Activated CD8-positive, alpha-beta T cell treated with anti-CD3 and anti-CD28 coated beads for 36 hours (primary cell): ENCODE measurements at regions of chr14 and their contacts with region 1.

Region 1: GRCh38 chr14:67571272-67571850 is 28.7 kb downstream of the PIGH start:
- DNase-seq: peak; percentile 84
- ATAC-seq: peak; percentile 96
- H3K4me3 Mint-ChIP-seq: no peak overlapping the region
- H3K27ac Mint-ChIP-seq: no peak overlapping the region
- H3K4me1 Mint-ChIP-seq: peaks cover 3% of the 10 kb centered on the region
- H3K27me3 Mint-ChIP-seq: no peaks in the 10 kb centered on the region
- CTCF ChIP-seq: peak; percentile 83

Region 2: DNA sequence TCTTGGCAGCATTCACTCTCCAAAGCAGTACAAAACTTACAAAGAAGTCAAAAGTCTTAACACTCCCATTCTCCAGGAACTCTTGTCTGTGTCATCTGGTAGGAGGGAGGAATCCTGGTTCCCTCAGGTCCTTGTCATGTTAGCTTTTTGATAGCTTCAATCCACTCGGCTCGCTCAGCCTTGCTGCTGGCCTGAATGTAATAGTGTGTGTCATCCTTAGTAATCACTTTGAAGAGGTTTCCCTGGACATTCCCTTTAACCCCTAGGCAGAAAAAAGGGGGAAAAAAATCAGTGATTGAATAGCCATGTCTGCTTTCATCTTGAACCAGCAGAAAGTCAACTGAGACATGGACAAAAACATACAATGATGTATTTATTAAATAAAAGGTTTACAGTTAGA is 184.2 kb before region 1 on chr14:
- CTCF ChIA-PET with region 1: interaction called, 10 read pairs
- POLR2A ChIA-PET with region 1: no interaction called
- intact Hi-C with region 1: no loop called
- DNase-seq: no peak
- ATAC-seq: no peak
- H3K4me3 Mint-ChIP-seq: no peak overlapping the region
- H3K27ac Mint-ChIP-seq: no peak overlapping the region
- H3K4me1 Mint-ChIP-seq: no peaks in the 10 kb centered on the region
- H3K27me3 Mint-ChIP-seq: no peaks in the 10 kb centered on the region
- CTCF ChIP-seq: no peak

Region 3: GRCh38 chr14:67420102-67420830 is 151.1 kb before region 1 on chr14:
- CTCF ChIA-PET with region 1: interaction called, 199 read pairs
- POLR2A ChIA-PET with region 1: interaction called, 3 read pairs
- intact Hi-C with region 1: no loop called
- DNase-seq: peak; percentile 53
- ATAC-seq: peak; percentile 67
- H3K4me3 Mint-ChIP-seq: no peak overlapping the region
- H3K27ac Mint-ChIP-seq: no peak overlapping the region
- H3K4me1 Mint-ChIP-seq: no peaks in the 10 kb centered on the region
- H3K27me3 Mint-ChIP-seq: peaks cover 13% of the 10 kb centered on the region
- CTCF ChIP-seq: peak; percentile 62

Region 4: DNA sequence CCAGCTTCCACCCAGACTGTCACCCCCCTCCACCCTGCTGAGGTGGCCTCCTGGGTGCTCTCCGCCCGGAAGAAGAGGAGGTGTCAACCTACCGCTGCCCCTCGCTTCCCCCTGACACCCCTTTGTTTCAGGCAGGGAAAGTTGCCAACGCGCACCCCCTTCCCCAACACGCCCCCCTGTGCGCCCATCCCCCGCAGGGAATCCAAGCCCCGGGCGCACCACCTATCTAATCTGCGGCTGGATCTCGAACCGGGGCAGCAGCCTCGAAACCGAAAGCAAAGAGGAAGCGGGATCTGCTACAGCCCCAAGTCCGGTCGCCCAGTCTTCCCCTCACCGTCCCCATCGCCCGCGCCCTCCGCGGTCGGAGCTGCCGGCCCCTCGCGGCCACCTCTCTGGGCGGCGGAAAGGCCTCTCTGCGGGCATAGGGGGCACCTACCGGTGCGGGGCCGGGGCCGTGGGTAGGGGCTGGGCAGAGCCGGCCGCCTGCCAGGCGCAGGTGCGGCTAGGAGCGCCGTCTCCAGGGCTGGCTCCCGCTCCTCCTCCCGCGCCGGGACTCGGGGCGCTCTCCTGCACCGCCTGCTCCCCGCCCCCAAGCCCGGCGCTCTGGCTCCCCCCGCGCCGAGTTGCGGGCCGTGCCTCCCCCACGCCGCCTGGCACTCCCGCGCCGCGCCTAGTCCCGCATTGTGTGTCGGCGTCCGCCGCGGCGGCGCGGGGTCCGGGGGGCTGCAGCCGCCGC is 56.5 kb before region 1 on chr14:
- CTCF ChIA-PET with region 1: interaction called, 18 read pairs
- POLR2A ChIA-PET with region 1: no interaction called
- intact Hi-C with region 1: no loop called
- DNase-seq: peak; percentile 43
- ATAC-seq: peak; percentile 63
- H3K4me3 Mint-ChIP-seq: peak overlapping the region; percentile 78
- H3K27ac Mint-ChIP-seq: peak overlapping the region; percentile 74
- H3K4me1 Mint-ChIP-seq: peaks cover 32% of the 10 kb centered on the region
- H3K27me3 Mint-ChIP-seq: peaks cover 2% of the 10 kb centered on the region
- CTCF ChIP-seq: no peak

Region 5: DNA sequence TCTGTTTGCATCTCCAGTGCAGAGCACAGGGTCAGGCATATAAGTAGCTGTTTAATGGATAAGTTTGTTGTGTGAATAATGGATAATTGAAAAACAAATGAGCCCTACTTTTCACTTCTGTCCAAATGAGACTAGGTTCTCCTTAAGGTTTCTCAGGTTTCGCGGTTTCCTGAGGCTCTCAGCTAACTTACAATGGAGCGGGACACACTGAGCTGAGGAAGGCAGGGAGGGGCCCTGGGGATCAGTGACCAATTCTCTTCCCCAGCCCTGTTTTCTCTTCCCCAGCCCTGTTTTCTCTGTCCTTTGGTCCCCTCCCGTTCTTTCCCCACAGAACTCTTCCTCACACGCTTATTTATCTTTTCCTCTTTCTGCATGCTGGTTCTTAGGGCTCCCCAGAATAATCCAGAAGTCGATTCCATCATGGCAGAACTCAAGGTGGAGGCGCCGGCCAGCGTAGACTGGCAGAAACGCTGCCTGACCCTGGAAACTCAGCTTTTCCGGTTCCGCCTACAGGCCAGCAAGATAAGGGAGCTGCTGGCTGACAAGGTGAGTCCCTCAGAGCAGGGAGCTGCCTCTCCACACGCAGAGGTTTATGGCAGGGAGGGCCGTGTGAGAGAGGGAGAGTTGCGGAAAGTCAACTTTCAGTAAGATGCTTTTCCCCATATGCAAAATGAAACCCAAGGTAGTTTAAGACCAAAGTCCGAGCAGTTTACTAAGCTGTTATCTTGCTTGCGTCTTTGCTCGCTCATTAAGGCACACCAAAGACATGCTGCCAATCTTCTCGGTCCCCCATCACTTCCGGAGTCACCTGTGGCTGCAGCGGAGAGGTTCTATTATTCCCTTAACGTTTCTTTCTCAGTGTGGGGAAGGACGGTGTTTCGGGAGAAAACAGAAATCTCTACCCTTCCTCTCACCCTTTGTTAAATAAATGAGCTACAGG is 29.6 kb before region 1 on chr14:
- CTCF ChIA-PET with region 1: interaction called, 14 read pairs
- POLR2A ChIA-PET with region 1: no interaction called
- intact Hi-C with region 1: no loop called
- DNase-seq: peak; percentile 56
- ATAC-seq: peak; percentile 56
- H3K4me3 Mint-ChIP-seq: peak overlapping the region; percentile 58
- H3K27ac Mint-ChIP-seq: no peak overlapping the region
- H3K4me1 Mint-ChIP-seq: peaks cover 8% of the 10 kb centered on the region
- H3K27me3 Mint-ChIP-seq: peaks cover 16% of the 10 kb centered on the region
- CTCF ChIP-seq: no peak

Region 6: GRCh38 chr14:67619446-67620216 is 48.3 kb after region 1 on chr14 and contains the start of gene ARG2:
- CTCF ChIA-PET with region 1: interaction called, 10 read pairs
- POLR2A ChIA-PET with region 1: no interaction called
- intact Hi-C with region 1: no loop called
- DNase-seq: peak; percentile 98
- ATAC-seq: peak; percentile 92
- H3K4me3 Mint-ChIP-seq: peak within 1 kb of the TSS; percentile 83
- H3K27ac Mint-ChIP-seq: peak within 1 kb of the TSS; percentile 78
- H3K4me1 Mint-ChIP-seq: peaks cover 27% of the 10 kb centered on the region
- H3K27me3 Mint-ChIP-seq: peaks cover 12% of the 10 kb centered on the region
- CTCF ChIP-seq: no peak
- total RNA-seq, gene ARG2: 9.9 TPM